ENCODE measurements at regions of chr22 and their contacts with region 1.

Region 1: DNA sequence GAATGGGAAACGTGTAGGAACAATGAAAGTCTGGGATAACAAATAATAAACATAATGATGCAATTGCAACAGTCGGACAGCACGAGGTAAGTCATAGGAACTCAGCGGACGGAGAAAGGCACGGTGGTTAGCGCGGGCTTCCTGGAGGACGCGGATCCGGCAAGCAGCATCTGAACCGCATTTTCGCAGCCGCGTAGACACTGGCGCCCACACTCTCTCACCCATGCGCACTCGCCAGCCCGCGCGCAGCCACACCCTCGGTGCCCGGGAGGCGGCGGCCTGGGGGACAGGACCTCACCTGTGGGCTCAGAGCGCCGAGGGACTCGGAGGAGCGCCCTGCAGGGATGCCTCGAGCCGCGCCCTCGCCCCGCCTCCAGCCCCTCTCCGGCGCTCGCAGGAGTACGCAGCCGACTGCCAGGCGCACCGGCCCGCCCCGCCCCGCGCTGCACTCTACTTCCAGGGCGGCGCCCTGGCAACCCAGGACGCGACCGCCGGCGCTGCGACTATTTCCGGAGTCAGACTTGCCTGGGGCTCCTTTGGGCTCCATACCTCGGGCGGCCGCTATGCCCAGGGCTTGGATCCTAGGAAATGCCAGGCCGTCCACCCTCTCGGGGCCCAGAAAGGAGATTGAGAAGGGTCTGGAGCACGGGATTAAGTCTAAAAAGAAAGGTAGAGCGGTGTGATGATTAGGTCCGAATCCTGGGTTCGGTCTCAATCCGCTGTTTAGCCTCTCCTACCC is at the start of gene TTLL1:
- DNase-seq: peak; percentile 90 to 94
- H3K4me3 ChIP-seq: peak within 1 kb of the TSS; percentile 64
- H3K4me3 Mint-ChIP-seq: peak within 1 kb of the TSS; percentile 91
- H3K27ac Mint-ChIP-seq: peak within 1 kb of the TSS; percentile 82
- H3K4me1 ChIP-seq: no peaks in the 10 kb centered on the region
- H3K4me1 Mint-ChIP-seq: peaks cover 8% of the 10 kb centered on the region
- H3K27me3 ChIP-seq: no peaks in the 10 kb centered on the region
- H3K27me3 Mint-ChIP-seq: no peaks in the 10 kb centered on the region
- CTCF ChIP-seq: no peak
- total RNA-seq, gene TTLL1: 4.1 and 4.4 TPM in 2 replicates

Region 2: DNA sequence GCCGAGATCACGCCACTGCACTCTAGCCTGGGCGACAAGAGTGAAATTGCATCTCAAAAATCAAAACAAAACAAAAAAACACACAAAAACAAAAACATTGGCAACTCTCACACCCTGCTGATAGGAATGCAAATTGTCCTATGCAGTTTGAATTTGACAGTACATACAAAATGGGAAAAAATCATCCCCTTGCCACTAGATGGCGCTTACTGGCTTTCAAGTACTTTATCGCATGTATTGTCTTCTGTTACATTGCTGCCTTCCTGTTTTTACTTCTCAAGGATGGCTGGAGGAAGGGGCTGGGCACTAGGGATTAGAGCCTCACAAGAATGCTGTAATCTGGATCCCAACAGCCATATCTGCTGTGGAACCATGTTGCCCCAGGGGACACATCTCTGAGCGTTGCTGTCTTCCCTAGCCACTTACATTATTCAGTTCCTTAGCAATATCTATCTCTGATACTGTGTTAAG is 309.0 kb before region 1 on chr22:
- CTCF ChIA-PET with region 1: no interaction called
- POLR2A ChIA-PET with region 1: no interaction called
- intact Hi-C with region 1: loop called (anchors 1 kb)
- DNase-seq: peak; percentile 81 to 83
- H3K4me3 ChIP-seq: no peak overlapping the region
- H3K4me3 Mint-ChIP-seq: no peak overlapping the region
- H3K27ac Mint-ChIP-seq: no peak overlapping the region
- H3K4me1 ChIP-seq: no peaks in the 10 kb centered on the region
- H3K4me1 Mint-ChIP-seq: no peaks in the 10 kb centered on the region
- H3K27me3 ChIP-seq: no peaks in the 10 kb centered on the region
- H3K27me3 Mint-ChIP-seq: no peaks in the 10 kb centered on the region
- CTCF ChIP-seq: peak; percentile 76 to 93

Region 3: DNA sequence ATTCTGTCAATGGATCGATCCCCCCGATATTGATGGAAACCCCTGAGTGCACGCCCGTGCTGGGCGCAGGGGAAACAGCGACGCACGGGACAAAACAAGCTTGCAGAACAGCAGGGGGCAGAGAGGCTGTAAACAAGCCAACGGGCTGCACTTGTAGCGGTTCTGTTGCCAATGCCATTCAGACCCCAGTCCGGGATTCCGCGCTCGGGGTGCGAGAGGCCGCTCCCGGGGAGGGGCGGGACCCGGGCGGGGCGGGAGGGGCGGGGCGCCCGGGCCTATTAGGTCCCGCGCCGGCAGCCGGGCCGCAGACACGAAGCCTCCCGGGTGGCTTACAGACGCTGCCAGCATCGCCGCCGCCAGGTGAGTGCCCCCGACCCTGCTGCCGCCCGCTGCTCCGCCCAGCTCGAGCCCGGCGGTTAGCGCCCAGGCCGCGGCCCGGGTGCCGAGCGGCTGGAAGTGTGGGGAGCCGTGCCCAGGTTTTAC is 21.3 kb after region 1 on chr22 and contains the start of gene BIK:
- CTCF ChIA-PET with region 1: interaction called, 4 read pairs
- POLR2A ChIA-PET with region 1: no interaction called
- intact Hi-C with region 1: loop called (anchors 2 kb)
- DNase-seq: peak; percentile 62 to 64
- H3K4me3 ChIP-seq: peak within 1 kb of the TSS; percentile 87
- H3K4me3 Mint-ChIP-seq: peak within 1 kb of the TSS; percentile 76
- H3K27ac Mint-ChIP-seq: no peak within 1 kb of the TSS
- H3K4me1 ChIP-seq: peaks cover 4% of the 10 kb centered on the region
- H3K4me1 Mint-ChIP-seq: peaks cover 7% of the 10 kb centered on the region
- H3K27me3 ChIP-seq: no peaks in the 10 kb centered on the region
- H3K27me3 Mint-ChIP-seq: no peaks in the 10 kb centered on the region
- CTCF ChIP-seq: peak in 1 of 2 experiments; percentile 34
- total RNA-seq, gene BIK: 13.3 and 17.6 TPM in 2 replicates

Region 4: GRCh38 chr22:43142880-43143562 is 53.9 kb after region 1 on chr22 and contains the start of gene MCAT:
- CTCF ChIA-PET with region 1: no interaction called
- POLR2A ChIA-PET with region 1: interaction called, 11 read pairs
- intact Hi-C with region 1: no loop called
- DNase-seq: peak; percentile 80 to 90
- H3K4me3 ChIP-seq: peak within 1 kb of the TSS; percentile 98
- H3K4me3 Mint-ChIP-seq: peak within 1 kb of the TSS; percentile 81
- H3K27ac Mint-ChIP-seq: peak within 1 kb of the TSS; percentile 87
- H3K4me1 ChIP-seq: peaks cover 7% of the 10 kb centered on the region; the same call in 1 of the 2 replicates
- H3K4me1 Mint-ChIP-seq: no peaks in the 10 kb centered on the region
- H3K27me3 ChIP-seq: no peaks in the 10 kb centered on the region
- H3K27me3 Mint-ChIP-seq: no peaks in the 10 kb centered on the region
- CTCF ChIP-seq: no peak
- total RNA-seq, gene MCAT: 23.5 and 23.8 TPM in 2 replicates

Region 5: DNA sequence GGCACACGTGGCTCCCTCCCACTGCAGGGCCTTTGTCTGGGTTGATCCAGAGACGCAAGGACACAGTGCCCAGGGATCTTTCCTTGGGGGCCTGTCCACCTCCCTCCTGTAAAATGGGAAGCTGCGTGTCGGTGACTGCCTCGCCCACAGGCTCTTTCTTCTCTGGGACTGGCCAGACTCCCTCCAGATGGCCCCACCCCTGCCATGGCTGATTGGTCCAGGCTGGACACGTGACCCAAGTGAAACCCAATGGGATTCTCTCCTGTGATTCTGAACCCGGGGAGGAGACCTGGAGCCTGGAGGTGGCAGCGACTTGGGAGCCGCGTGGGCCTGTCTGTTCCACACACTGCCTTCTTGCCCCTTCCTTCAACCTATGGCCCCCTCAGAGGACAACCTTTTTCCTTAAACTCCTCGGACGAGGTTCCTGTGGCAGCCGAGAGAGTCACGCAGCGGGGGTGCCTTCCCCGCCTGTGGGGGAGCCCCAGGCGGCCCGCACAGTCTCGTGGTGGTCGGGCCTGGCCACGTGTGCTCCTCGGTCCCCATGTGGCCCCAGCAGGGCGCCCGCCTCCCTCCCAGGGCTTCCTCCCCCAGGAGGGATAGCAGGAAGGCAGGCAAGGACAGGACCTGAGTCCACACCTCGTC is 310.3 kb after region 1 on chr22:
- CTCF ChIA-PET with region 1: no interaction called
- POLR2A ChIA-PET with region 1: no interaction called
- intact Hi-C with region 1: no loop called
- DNase-seq: no peak
- H3K4me3 ChIP-seq: no peak overlapping the region
- H3K4me3 Mint-ChIP-seq: no peak overlapping the region
- H3K27ac Mint-ChIP-seq: no peak overlapping the region
- H3K4me1 ChIP-seq: no peaks in the 10 kb centered on the region
- H3K4me1 Mint-ChIP-seq: no peaks in the 10 kb centered on the region
- H3K27me3 ChIP-seq: no peaks in the 10 kb centered on the region
- H3K27me3 Mint-ChIP-seq: peaks cover 11% of the 10 kb centered on the region
- CTCF ChIP-seq: no peak

Measured in Caco-2 (cell line).